Left ventricle myocardium superior (tissue), 1 donor: ENCODE measurements at regions of chr15 and their contacts with region 1.

Region 1: DNA sequence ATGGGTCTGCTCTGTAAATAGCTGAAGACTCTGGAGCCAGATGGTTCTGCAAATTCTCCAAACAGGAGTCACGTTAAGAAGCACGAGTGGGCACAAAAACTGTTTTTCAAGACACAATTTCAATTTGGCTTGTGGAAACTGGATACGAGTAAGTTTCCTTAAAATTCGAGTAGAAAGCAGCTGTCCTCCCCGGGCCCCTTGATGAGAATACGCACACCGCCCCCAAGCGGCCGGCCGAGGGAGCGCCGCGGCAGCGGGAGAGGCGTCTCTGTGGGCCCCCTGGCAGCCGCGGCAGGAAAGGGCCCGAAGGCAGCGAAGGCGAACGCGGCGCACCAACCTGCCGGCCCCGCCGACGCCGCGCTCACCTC is 778 bp upstream of the THBS1 start:
- DNase-seq: peak; percentile 97
- ATAC-seq: peak; percentile 91

Region 2: DNA sequence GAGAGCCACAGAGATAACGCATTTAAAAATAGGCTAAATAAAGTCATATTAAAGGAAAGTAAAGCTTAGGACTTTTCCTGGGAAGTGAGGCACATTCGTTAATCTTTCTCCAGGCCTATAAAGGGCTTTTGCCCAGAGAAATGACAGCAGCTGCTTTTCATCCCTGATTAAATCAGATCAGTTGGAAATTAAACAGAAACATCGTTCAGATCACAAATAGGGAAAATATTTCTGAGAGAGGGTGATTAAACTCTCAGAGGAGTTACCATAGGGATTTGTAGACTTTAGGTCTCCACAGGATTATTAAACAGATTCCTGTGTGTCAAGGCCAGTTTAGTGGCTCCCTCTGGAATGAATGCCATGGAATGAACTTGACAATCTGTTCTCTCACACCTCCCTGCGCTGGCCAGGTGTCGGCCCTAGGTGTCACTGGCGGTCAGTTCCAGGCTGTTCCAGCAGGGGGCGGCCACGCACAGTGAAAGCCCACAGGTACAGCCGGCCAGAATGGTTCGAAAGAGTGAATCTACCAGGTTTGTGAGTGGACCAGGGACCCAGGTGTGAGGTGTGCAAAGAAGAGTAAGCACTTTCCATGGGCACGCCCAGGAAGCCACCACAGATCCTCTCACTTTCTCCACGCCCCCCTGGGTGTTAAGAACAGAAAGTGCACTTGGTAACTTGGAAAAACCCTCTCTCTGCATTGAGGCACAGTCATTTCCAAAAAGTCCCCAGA is 762.5 kb before region 1 on chr15:
- intact Hi-C with region 1: loop called (anchors 10 kb)
- DNase-seq: peak; percentile 89
- ATAC-seq: peak; percentile 94

Region 3: GRCh38 chr15:39125904-39126303 is 454.2 kb before region 1 on chr15:
- intact Hi-C with region 1: loop called (anchors 5 kb)
- DNase-seq: no peak
- ATAC-seq: no peak

Region 4: GRCh38 chr15:39171944-39172368 is 408.1 kb before region 1 on chr15:
- intact Hi-C with region 1: loop called (anchors 5 kb)
- DNase-seq: no peak
- ATAC-seq: peak; percentile 92